OCI-LY7 (cell line): ENCODE measurements at regions of chr20 and their contacts with region 1.

Region 1: DNA sequence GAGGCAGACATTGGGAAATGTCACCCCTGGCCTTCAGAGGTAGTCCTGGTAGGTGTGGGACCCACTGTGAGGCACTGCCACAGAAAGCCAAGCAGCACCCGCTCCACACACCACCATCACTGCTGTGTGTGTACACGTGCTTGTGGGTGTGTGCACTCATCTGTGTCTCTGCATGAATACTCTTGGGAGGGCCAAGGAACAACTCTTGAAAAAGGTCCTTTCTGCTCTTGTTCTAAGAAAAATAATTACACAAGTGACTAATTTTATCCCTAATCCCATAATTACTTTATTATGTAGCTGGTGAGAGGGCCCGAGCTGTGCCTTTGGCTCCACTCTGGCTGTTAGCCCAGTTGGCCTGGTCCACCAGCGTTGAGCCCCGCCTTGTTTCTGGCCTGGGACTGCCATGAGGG is 21.7 kb upstream of the EPB41L1 start:
- DNase-seq: peak; percentile 60
- H3K4me3 ChIP-seq: no peak overlapping the region
- H3K27ac ChIP-seq: no peak overlapping the region
- H3K4me1 ChIP-seq: peaks cover 33% of the 10 kb centered on the region
- CTCF ChIP-seq: no peak

Region 2: DNA sequence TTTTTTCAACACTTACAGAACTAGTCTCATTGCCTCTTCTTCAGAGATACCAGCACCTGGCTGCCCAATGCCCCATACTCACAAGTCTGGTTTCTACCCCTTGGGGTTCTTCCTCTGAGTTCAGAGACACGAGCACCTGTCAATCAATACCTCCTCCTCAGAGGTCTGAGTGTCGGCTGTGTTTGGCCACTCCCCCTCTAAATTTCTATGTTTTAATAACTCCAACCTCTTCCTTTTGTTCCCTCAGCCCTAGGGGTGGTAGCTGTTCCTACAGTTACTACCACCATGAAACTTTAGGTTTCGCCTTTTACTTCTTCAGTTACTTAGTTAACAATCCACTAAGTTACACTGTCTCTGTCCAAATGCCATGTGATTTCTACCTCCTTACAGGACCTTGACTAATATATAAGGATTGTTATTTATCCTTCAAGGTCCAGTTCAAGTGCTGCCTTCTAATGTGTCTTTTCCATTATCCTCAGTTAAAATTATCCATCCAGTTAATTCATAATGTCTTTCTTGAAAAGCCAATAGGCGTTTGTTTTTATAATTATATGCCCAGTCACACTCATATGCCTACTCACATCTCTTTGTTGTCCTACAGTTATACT is 375.6 kb before region 1 on chr20:
- CTCF ChIA-PET with region 1: no interaction called
- POLR2A ChIA-PET with region 1: no interaction called
- intact Hi-C with region 1: no loop called
- DNase-seq: no peak
- H3K4me3 ChIP-seq: no peak overlapping the region
- H3K27ac ChIP-seq: no peak overlapping the region
- H3K4me1 ChIP-seq: peaks cover 4% of the 10 kb centered on the region
- CTCF ChIP-seq: no peak

Region 3: GRCh38 chr20:36050436-36051317 is 82.1 kb before region 1 on chr20:
- CTCF ChIA-PET with region 1: no interaction called
- POLR2A ChIA-PET with region 1: no interaction called
- intact Hi-C with region 1: loop called (anchors 5 kb)
- DNase-seq: peak; percentile 95
- H3K4me3 ChIP-seq: peak overlapping the region; percentile 100
- H3K27ac ChIP-seq: peak overlapping the region; percentile 80
- H3K4me1 ChIP-seq: peaks cover 15% of the 10 kb centered on the region
- CTCF ChIP-seq: no peak

Region 4: GRCh38 chr20:36248836-36249235 is 116.0 kb after region 1 on chr20:
- CTCF ChIA-PET with region 1: no interaction called
- POLR2A ChIA-PET with region 1: no interaction called
- intact Hi-C with region 1: no loop called
- DNase-seq: no peak
- H3K4me3 ChIP-seq: no peak overlapping the region
- H3K27ac ChIP-seq: no peak overlapping the region
- H3K4me1 ChIP-seq: no peaks in the 10 kb centered on the region
- CTCF ChIP-seq: no peak